Activated CD8-positive, alpha-beta T cell treated with anti-CD3 and anti-CD28 coated beads, Interleukin-2, amount 10 ng/mL, durations not matched to agents 7 days and 5 days (primary cell): ENCODE measurements at regions of chr3 and their contacts with region 1.

Region 1: GRCh38 chr3:49539659-49540560 is 14.4 kb upstream of the BSN start:
- DNase-seq: peak; percentile 93
- ATAC-seq: peak; percentile 92
- H3K4me3 Mint-ChIP-seq: peak overlapping the region; percentile 73
- H3K27ac Mint-ChIP-seq: no peak overlapping the region
- H3K4me1 Mint-ChIP-seq: peaks cover 10% of the 10 kb centered on the region
- H3K27me3 Mint-ChIP-seq: peaks cover 14% of the 10 kb centered on the region

Region 2: GRCh38 chr3:49469936-49470713 is 69.8 kb before region 1 on chr3 and contains the start of gene DAG1:
- CTCF ChIA-PET with region 1: interaction called, 15 read pairs
- POLR2A ChIA-PET with region 1: no interaction called
- DNase-seq: peak; percentile 96
- ATAC-seq: peak; percentile 92
- H3K4me3 Mint-ChIP-seq: peak within 1 kb of the TSS; percentile 86
- H3K27ac Mint-ChIP-seq: peak within 1 kb of the TSS; percentile 88
- H3K4me1 Mint-ChIP-seq: peaks cover 23% of the 10 kb centered on the region
- H3K27me3 Mint-ChIP-seq: no peaks in the 10 kb centered on the region
- total RNA-seq, gene DAG1: 18.8 to 19.7 TPM

Region 3: DNA sequence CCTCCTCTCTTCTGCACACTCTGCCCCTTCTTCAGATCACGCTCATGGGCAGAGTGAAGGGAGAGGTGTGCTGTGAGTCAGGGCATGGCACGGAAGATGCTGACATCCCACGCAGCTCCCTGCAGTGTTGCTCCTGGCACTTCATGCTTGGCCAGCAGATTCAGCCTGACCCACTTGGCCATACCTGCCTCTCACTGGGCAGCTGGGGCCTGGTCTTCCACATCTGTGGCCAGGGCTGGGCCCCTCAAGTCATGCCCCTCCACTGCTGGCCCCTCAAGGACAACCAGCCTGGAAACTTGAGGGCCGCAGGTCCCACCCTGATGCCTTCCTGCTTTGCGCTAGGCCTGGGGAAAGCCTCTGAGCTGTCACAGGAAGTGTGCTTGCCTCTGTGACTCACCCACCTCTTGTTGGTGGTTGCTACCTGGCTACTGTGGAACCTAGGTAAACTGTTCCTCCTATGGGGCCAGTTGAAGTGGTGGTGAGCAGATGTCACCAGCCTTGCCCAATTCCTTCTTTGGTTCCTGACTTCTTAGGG is 63.0 kb after region 1 on chr3:
- CTCF ChIA-PET with region 1: interaction called, 11 read pairs
- POLR2A ChIA-PET with region 1: interaction called, 3 read pairs
- DNase-seq: peak; percentile 81
- ATAC-seq: peak; percentile 98
- H3K4me3 Mint-ChIP-seq: peak overlapping the region; percentile 12
- H3K27ac Mint-ChIP-seq: peak overlapping the region; percentile 88
- H3K4me1 Mint-ChIP-seq: peaks cover 21% of the 10 kb centered on the region
- H3K27me3 Mint-ChIP-seq: no peaks in the 10 kb centered on the region

Region 4: GRCh38 chr3:49673715-49674496 is 134.0 kb after region 1 on chr3 and contains the start of gene APEH:
- CTCF ChIA-PET with region 1: interaction called, 228 read pairs
- POLR2A ChIA-PET with region 1: interaction called, 9 read pairs
- DNase-seq: peak; percentile 99
- ATAC-seq: peak; percentile 91
- H3K4me3 Mint-ChIP-seq: peak within 1 kb of the TSS; percentile 93
- H3K27ac Mint-ChIP-seq: peak within 1 kb of the TSS; percentile 99
- H3K4me1 Mint-ChIP-seq: peaks cover 28% of the 10 kb centered on the region
- H3K27me3 Mint-ChIP-seq: no peaks in the 10 kb centered on the region
- total RNA-seq, gene APEH: 179 to 192 TPM

Region 5: GRCh38 chr3:49802719-49803464 is 263.0 kb after region 1 on chr3 and contains the start of gene INKA1:
- CTCF ChIA-PET with region 1: interaction called, 12 read pairs
- POLR2A ChIA-PET with region 1: no interaction called
- DNase-seq: peak; percentile 93
- ATAC-seq: peak; percentile 87
- H3K4me3 Mint-ChIP-seq: peak within 1 kb of the TSS; percentile 83
- H3K27ac Mint-ChIP-seq: peak within 1 kb of the TSS; percentile 83
- H3K4me1 Mint-ChIP-seq: peaks cover 46% of the 10 kb centered on the region
- H3K27me3 Mint-ChIP-seq: peaks cover 16% of the 10 kb centered on the region
- total RNA-seq, gene INKA1: 1.3 to 2.2 TPM